Activated T-helper 2 cell treated with anti-CD3 and anti-CD28 coated beads, Interferon-gamma antibody, Interleukin-2, Interleukin-4, amounts not matched to agents 10 μg/mL and 5 μg/mL and 100 μg/mL, durations not matched to agents 14 hours and 24 hours and 36 hours (primary cell): ENCODE measurements at regions of chr6 and their contacts with region 1.

Region 1: GRCh38 chr6:27503436-27504030 is 30.6 kb upstream of the ZNF184 start:
- DNase-seq: peak; percentile 63
- H3K4me3 Mint-ChIP-seq: peak overlapping the region; percentile 88
- H3K27ac Mint-ChIP-seq: peak overlapping the region; percentile 23
- H3K4me1 Mint-ChIP-seq: peaks cover 23% of the 10 kb centered on the region
- H3K27me3 Mint-ChIP-seq: peaks cover 32% of the 10 kb centered on the region

Region 2: GRCh38 chr6:27177485-27178406 is 325.8 kb before region 1 on chr6:
- intact Hi-C with region 1: loop called (anchors 5 kb)
- DNase-seq: peak; percentile 65
- H3K4me3 Mint-ChIP-seq: peak overlapping the region; percentile 90
- H3K27ac Mint-ChIP-seq: peak overlapping the region; percentile 87
- H3K4me1 Mint-ChIP-seq: peaks cover 11% of the 10 kb centered on the region
- H3K27me3 Mint-ChIP-seq: peaks cover 37% of the 10 kb centered on the region

Region 3: DNA sequence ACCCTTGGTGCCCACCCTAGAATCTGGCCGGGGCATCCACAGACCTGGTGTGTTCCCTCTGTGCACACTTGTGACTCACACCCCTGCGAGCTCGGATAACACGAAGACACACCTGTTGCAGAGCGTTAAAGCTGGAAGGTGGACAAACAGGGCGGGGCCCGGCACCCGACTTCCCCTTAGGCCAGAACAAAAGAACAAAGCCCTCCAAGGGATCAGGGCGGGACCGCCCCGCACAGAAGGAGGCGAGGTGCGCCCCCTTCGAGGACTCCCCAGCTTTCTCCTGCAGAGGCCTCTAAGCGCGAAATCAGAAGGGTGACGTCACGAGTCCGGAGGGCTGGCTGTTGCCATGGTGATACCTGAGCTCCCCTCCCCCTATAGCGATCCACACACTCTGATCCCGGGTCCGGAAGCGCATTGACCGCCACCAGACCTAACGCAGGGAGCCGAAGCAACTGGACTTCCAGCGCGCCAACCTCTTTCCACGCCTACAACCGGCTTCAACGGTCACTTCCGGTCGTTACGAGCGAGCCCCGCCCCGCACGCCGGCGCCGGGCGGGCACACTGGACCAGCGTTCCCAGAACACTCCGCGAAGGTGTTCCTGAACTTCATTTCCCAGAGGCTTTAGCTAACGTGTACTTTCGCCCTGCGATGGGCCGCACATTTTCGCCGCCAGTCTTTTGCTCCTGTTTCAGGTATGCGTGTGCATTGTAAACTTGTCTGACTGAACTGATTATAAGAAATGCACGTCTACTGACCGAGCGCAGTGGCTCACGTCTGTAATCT is 30.7 kb before region 1 on chr6 and contains the start of gene ZNF184:
- intact Hi-C with region 1: loop called (anchors 1 kb)
- DNase-seq: peak; percentile 87
- H3K4me3 Mint-ChIP-seq: peak within 1 kb of the TSS; percentile 92
- H3K27ac Mint-ChIP-seq: peak within 1 kb of the TSS; percentile 84
- H3K4me1 Mint-ChIP-seq: peaks cover 38% of the 10 kb centered on the region
- H3K27me3 Mint-ChIP-seq: peaks cover 3% of the 10 kb centered on the region
- total RNA-seq, gene ZNF184: 8.4 and 9.2 TPM in 2 replicates

Region 4: DNA sequence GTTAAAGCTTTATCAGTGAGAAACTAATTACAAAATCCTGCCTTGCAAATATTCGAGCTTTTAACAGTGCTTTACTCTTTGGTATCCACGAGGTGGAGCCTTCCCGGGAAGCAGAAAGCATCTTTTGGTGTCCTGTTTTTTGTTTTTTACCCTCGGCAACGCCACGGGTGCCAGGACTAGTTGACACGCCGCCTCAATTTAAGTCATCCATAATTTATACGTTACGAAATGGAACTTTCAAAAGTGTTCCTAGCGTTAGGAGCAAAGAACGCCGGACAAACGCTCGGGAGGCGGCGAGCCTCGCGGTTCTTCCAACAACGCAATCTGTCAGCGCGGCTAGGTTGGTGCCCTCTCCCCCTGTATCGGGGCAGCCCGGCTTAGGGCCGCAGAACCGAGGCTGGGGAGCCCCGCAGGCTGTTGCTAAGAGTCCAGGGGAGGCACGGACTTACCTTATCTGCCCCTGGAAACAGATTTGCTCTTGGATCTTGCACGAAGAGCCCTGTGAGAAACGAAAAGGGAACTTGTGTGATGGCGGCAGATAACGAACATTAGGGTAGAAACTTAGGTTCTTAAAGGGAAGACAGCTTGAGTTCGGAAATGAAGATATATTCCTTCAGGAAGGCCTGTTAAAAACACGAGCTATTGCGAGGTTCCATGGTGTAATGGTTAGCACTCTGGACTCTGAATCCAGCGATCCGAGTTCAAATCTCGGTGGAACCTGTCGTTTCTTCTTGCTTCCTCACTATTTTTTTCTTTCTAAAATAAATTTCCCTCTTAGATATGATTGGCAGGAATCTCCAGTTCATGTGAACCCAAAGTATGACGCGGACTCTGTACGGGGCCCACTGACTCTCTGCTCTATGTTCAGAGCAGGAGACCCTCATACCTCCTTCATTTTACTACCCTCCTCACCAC is 15.6 kb after region 1 on chr6:
- intact Hi-C with region 1: loop called (anchors 1 kb)
- DNase-seq: peak; percentile 30
- H3K4me3 Mint-ChIP-seq: peak overlapping the region; percentile 79
- H3K27ac Mint-ChIP-seq: peak overlapping the region; percentile 62
- H3K4me1 Mint-ChIP-seq: peaks cover 11% of the 10 kb centered on the region
- H3K27me3 Mint-ChIP-seq: peaks cover 30% of the 10 kb centered on the region

Region 5: DNA sequence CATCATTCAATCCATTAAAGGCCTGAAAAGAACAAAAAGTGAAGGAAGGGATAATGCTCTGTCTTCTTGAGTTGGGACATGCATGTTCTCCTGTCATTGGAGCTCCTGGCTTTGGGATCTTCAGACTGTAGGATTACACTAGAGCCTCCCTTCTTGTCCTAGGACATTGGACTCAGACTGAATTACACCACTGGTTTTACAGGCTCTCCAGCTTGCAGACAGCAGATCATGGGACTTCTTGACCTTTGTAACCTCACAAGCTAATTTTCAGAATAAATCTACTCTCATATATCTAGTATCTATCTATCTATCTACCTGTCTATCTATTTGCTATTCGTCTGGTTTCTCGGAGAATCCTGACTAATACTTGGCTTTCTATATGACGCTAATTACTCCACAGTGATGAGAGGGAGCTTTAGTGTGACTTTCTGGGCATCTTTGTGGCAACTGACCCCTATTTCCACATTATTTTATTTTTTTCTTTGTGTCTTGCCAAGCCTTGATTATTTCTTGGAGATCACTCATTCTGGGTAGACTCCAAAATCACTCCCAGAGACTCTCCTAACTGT is 121.2 kb after region 1 on chr6:
- intact Hi-C with region 1: no loop called
- DNase-seq: no peak
- H3K4me3 Mint-ChIP-seq: no peak overlapping the region
- H3K27ac Mint-ChIP-seq: no peak overlapping the region
- H3K4me1 Mint-ChIP-seq: no peaks in the 10 kb centered on the region
- H3K27me3 Mint-ChIP-seq: peaks cover 35% of the 10 kb centered on the region

Region 6: GRCh38 chr6:28136585-28137504 is 633.3 kb after region 1 on chr6:
- intact Hi-C with region 1: no loop called
- DNase-seq: peak; percentile 68
- H3K4me3 Mint-ChIP-seq: peak overlapping the region; percentile 98
- H3K27ac Mint-ChIP-seq: peak overlapping the region; percentile 98
- H3K4me1 Mint-ChIP-seq: peaks cover 59% of the 10 kb centered on the region
- H3K27me3 Mint-ChIP-seq: no peaks in the 10 kb centered on the region